H1 (cell line): ENCODE measurements at regions of chr17 and their contacts with region 1.

Region 1: DNA sequence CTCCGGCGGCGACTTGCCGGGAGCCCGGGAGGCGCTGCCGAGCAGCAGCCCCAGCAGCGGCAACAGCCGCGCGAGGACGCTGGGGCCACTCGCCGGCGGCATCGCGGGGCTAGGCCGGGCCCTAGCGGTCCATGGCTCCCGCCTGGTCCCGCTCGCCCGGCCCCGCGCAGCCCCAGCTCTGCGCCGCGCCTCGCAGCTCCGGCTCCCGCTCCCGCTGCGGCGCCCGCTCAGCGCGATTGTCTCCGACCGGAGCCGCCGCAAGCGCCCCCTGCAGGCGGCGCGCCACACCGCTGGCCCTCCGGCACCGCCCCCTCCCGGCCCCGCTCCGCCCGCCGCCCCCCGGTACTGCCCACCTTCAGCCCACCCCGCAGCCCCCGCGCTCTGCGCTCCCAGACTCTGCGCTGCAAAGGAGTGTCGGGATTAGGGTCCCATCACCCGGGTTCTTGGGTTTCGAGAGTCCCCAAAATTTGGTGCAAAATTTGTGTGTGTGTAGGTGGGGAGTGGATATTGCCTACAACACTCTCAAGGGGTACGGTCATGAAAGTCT is at the start of gene FAM171A2:
- DNase-seq: peak in 1 of 2 experiments; percentile 90
- H3K4me3 ChIP-seq: peak within 1 kb of the TSS; percentile 71 to 100 (median 76)
- H3K27ac ChIP-seq: peak within 1 kb of the TSS; percentile 30; the same call in 1 of the 2 replicates
- H3K4me1 ChIP-seq: peaks cover 9 to 23% (median 18%) of the 10 kb centered on the region in 4 experiments
- H3K27me3 ChIP-seq: no peaks in the 10 kb centered on the region
- CTCF ChIP-seq: peak; percentile 60 to 87 (median 84)
- EP300 ChIP-seq: no peak
- POLR2A ChIP-seq: peak; percentile 43 to 44; a peak in 2 of 3 replicates
- RAD21 ChIP-seq: peak in 1 of 2 experiments; percentile 34; a peak in 2 of 4 replicates
- total RNA-seq, gene FAM171A2: 23.9 and 24.1 TPM in 2 replicates

Region 2: DNA sequence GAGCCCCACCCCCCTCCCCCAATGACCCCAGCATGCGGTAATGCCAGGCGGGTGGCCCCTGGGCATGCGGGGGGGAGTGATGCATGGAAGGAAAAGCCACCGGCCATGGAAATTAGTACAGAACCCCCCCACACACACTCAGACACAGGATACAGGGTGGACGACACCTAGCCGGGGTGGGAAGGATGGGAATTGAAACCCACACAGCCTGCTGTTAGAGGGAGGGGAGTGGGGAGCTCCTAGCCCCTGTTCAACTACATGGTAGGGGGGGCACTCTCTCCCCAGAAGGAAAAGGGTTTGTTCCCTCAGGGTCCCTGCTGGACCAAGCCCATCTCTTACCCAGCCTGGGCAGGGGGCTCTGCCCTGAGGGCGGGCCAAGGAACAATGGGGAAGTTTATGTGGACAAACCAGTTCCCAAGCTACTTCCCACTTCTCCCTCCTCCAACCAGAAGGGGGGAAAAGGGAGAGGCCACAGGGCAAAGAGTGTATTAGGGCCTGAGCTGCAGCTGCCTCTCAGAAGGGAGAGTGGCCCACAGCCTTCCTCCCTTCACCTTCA is 171.7 kb before region 1 on chr17:
- CTCF ChIA-PET with region 1: interaction called, 3 read pairs
- POLR2A ChIA-PET with region 1: interaction called, 10 read pairs
- DNase-seq: peak; percentile 44 to 69
- H3K4me3 ChIP-seq: peak overlapping the region in 3 of 4 experiments; percentile 23 to 28 (median 28); a peak in 3 of 8 replicates
- H3K27ac ChIP-seq: no peak overlapping the region
- H3K4me1 ChIP-seq: peaks cover 0 to 12% (median 9%) of the 10 kb centered on the region in 4 experiments; a peak in 6 of 7 replicates
- H3K27me3 ChIP-seq: no peaks in the 10 kb centered on the region
- CTCF ChIP-seq: no peak
- EP300 ChIP-seq: no peak
- POLR2A ChIP-seq: peak in 1 of 2 experiments; percentile 68; a peak in 1 of 3 replicates
- RAD21 ChIP-seq: no peak

Region 3: DNA sequence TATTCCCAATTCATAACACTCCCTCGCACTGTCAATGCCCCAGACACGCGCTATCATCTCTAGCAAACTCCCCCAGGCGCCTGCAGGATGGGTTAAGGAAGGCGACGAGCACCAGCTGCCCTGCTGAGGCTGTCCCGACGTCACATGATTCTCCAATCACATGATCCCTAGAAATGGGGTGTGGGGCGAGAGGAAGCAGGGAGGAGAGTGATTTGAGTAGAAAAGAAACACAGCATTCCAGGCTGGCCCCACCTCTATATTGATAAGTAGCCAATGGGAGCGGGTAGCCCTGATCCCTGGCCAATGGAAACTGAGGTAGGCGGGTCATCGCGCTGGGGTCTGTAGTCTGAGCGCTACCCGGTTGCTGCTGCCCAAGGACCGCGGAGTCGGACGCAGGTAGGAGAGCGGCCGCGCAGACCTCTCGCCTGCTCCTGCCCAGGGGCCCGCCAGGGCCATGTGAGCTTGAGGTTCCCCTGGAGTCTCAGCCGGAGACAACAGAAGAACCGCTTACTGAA is 18.7 kb before region 1 on chr17 and contains the start of gene GRN:
- CTCF ChIA-PET with region 1: interaction called, 33 read pairs
- POLR2A ChIA-PET with region 1: interaction called, 4 read pairs
- DNase-seq: peak; percentile 89 to 92
- H3K4me3 ChIP-seq: peak within 1 kb of the TSS; percentile 52 to 95 (median 78)
- H3K27ac ChIP-seq: 0 out of 2 replicates have a peak within 1 kb of the TSS, but pooled peaks have one; percentile 16
- H3K4me1 ChIP-seq: peaks cover 0 to 2% (median 0%) of the 10 kb centered on the region in 4 experiments; a peak in 3 of 7 replicates
- H3K27me3 ChIP-seq: peaks cover 0 to 3% (median 0%) of the 10 kb centered on the region in 4 experiments; a peak in 3 of 7 replicates
- CTCF ChIP-seq: no peak; a peak in 1 of 4 replicates
- EP300 ChIP-seq: peak in 1 of 2 experiments; percentile 67; a peak in 1 of 3 replicates
- POLR2A ChIP-seq: peak; percentile 76 to 86
- RAD21 ChIP-seq: no peak
- total RNA-seq, gene GRN: 108 and 117 TPM in 2 replicates

Region 4: DNA sequence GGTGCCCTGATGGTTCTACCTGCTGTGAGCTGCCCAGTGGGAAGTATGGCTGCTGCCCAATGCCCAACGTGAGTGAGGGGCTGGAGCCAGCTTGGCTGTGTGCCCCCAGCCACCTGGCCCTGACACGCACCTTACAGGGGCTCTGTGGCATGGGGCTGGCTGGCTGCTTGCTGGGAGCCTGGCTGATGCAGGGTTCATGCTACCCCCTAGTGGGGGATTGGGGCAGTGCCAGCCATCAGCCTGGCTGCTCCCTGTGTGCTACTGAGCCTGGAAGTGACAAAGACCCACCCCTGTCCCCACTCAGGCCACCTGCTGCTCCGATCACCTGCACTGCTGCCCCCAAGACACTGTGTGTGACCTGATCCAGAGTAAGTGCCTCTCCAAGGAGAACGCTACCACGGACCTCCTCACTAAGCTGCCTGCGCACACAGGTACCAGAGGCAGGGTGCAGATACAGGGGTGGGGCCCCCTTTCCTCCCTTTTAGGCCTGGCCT is 12.9 kb before region 1 on chr17:
- CTCF ChIA-PET with region 1: interaction called, 177 read pairs
- POLR2A ChIA-PET with region 1: interaction called, 18 read pairs
- DNase-seq: peak in 1 of 2 experiments; percentile 90
- H3K4me3 ChIP-seq: no peak overlapping the region
- H3K27ac ChIP-seq: no peak overlapping the region
- H3K4me1 ChIP-seq: peaks cover 0 to 8% (median 4%) of the 10 kb centered on the region in 4 experiments; a peak in 4 of 7 replicates
- H3K27me3 ChIP-seq: no peaks in the 10 kb centered on the region; a peak in 2 of 7 replicates
- CTCF ChIP-seq: peak; percentile 82 to 95 (median 90)
- EP300 ChIP-seq: no peak
- POLR2A ChIP-seq: no peak
- RAD21 ChIP-seq: peak; percentile 81 to 82

Region 5: DNA sequence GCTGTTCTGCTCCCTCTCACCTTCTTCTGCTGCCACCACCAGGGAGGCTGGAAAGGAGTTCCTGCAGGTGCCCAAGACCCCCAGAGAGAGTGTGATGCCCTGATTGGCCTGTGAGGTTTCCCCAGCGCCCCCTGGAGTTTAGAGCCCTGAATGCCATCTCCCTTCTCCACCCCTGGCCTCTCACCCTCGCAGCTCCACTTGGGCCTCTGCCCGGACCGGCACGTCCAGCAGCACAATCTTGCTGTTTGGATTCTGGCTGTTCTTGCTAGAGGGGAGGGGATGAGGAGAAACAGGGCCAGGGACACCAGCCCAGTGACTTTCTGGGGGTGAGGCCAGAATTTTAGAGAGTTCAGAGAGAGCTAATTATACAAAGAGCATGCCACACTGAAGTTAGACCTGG is 12.4 kb after region 1 on chr17:
- CTCF ChIA-PET with region 1: interaction called, 177 read pairs
- POLR2A ChIA-PET with region 1: interaction called, 13 read pairs
- DNase-seq: peak in 1 of 2 experiments; percentile 87
- H3K4me3 ChIP-seq: no peak overlapping the region
- H3K27ac ChIP-seq: no peak overlapping the region
- H3K4me1 ChIP-seq: peaks cover 4 to 20% (median 14%) of the 10 kb centered on the region in 4 experiments; a peak in 6 of 7 replicates
- H3K27me3 ChIP-seq: no peaks in the 10 kb centered on the region; a peak in 1 of 7 replicates
- CTCF ChIP-seq: peak; percentile 76 to 81 (median 79)
- EP300 ChIP-seq: no peak
- POLR2A ChIP-seq: no peak
- RAD21 ChIP-seq: peak in 1 of 2 experiments; percentile 33; a peak in 2 of 4 replicates